IMR-90 (cell line): ENCODE measurements at regions of chr4 and their contacts with region 1.

Region 1: DNA sequence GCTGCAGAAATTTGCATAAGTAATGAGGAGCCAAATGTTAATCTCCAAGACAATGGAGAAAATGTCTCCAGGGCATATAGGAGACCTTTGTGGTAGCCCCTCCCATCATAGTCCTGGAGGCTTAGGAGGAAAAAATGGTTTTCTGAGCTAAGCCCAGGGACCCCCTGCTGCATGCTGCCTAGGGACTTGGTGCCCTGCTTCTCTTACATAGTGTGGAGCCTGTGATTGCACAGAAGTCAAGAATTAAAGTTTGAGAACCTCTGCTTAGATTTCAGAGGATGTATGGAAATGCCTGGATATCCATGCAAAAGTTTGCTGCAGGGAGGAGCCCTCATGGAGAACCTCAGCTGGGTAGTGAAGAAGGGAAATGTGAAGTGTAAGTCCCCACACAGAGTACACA is 379.4 kb upstream of the TACR3 start:
- DNase-seq: no peak
- ATAC-seq: no peak
- H3K4me3 ChIP-seq: no peak overlapping the region
- H3K27ac ChIP-seq: no peak overlapping the region
- H3K4me1 ChIP-seq: no peaks in the 10 kb centered on the region
- H3K27me3 ChIP-seq: no peaks in the 10 kb centered on the region
- CTCF ChIP-seq: no peak
- POLR2A ChIP-seq: no peak
- RAD21 ChIP-seq: no peak

Region 2: DNA sequence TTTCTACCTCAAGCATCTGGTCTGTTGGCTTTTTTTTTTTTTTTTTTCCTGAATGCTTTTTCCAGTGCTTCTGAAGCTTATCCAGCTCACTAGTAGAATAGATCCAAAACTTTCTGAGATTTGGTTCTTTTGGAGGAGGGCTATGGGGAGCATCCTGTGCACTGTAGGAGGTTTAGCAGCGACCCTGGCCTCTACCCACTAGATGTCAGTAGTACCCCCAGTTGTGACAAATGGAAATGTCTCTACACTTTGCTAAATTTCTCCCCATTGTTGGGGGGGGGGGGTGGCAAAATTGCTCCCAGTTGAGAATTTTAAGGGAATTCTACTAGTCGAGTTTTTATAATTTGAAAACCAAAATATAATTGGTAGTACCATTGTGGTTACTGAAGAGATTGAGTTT is 1397.8 kb after region 1 on chr4:
- CTCF ChIA-PET with region 1: no interaction called
- POLR2A ChIA-PET with region 1: interaction called, 27 read pairs
- dilution Hi-C with region 1: no loop called
- in situ Hi-C with region 1: no loop called
- intact Hi-C with region 1: no loop called
- DNase-seq: no peak
- ATAC-seq: no peak
- H3K4me3 ChIP-seq: no peak overlapping the region
- H3K27ac ChIP-seq: no peak overlapping the region
- H3K4me1 ChIP-seq: no peaks in the 10 kb centered on the region
- H3K27me3 ChIP-seq: no peaks in the 10 kb centered on the region
- CTCF ChIP-seq: no peak
- POLR2A ChIP-seq: no peak
- RAD21 ChIP-seq: no peak